CD8-positive, alpha-beta T cell (primary cell): ENCODE measurements at regions of chr2 and their contacts with region 1.

Region 1: DNA sequence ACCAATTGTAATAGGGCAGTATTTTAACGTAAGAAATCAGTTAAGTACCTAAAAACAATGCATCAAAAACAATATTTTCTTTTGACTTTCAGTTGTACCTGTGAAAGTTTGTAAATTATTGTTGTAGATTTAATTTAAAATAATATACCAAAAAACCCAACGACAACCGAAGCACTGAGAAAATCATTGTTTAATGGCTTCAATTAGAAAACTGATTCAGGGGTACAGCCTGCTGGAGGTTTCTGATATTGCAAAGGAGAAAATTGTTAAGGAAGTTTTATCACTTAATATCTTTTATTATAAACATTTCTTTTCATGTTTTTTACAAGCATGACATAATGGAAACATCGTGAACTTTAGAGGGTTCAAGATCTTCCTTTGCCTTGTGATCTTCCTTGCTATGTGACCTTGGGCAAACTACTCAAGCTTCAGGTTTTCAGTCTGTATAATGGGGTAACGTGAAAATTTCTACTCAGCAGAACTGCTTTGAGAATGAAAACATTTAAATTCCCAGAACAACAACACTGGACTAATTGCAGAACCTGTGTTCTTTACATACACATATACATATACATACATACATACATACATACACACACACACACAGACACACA is 76.3 kb upstream of the GLS start:
- DNase-seq: peak in 2 of 9 experiments; percentile 22 to 33
- ATAC-seq: no peak
- H3K4me3 ChIP-seq: no peak overlapping the region
- H3K4me3 Mint-ChIP-seq: no peak overlapping the region
- H3K27ac ChIP-seq: no peak overlapping the region
- H3K27ac Mint-ChIP-seq: no peak overlapping the region
- H3K4me1 ChIP-seq: no peaks in the 10 kb centered on the region
- H3K4me1 Mint-ChIP-seq: no peaks in the 10 kb centered on the region
- H3K27me3 ChIP-seq: no peaks in the 10 kb centered on the region
- H3K27me3 Mint-ChIP-seq: no peaks in the 10 kb centered on the region
- CTCF ChIP-seq: peak; percentile 72

Region 2: DNA sequence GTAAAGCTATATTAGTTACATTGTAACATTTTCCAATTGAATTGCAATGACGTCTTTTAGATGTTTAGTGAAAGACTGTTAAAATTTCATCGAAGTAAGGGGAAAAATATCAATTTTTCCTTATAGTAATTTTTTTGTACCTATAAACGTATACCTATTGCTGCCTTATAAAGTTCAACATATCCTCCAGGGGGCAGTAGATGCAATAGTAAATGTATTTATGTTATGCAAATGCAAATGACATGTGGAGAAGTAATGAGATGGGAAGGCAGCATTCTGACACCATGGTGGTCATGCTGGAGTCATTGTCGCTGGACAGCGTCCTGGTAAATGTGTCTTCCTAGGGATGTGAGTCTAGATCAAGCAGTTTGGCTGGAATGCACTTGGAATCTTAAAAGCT is 780.4 kb before region 1 on chr2:
- CTCF ChIA-PET with region 1: no interaction called
- POLR2A ChIA-PET with region 1: no interaction called
- intact Hi-C with region 1: loop called in 1 of 2 experiments (anchors 10 kb)
- DNase-seq: peak in 2 of 9 experiments; percentile 42 to 54
- ATAC-seq: no peak
- H3K4me3 ChIP-seq: no peak overlapping the region
- H3K4me3 Mint-ChIP-seq: no peak overlapping the region
- H3K27ac ChIP-seq: no peak overlapping the region
- H3K27ac Mint-ChIP-seq: no peak overlapping the region
- H3K4me1 ChIP-seq: no peaks in the 10 kb centered on the region
- H3K4me1 Mint-ChIP-seq: no peaks in the 10 kb centered on the region
- H3K27me3 ChIP-seq: no peaks in the 10 kb centered on the region
- H3K27me3 Mint-ChIP-seq: peaks cover 17% of the 10 kb centered on the region
- CTCF ChIP-seq: peak; percentile 64

Region 3: DNA sequence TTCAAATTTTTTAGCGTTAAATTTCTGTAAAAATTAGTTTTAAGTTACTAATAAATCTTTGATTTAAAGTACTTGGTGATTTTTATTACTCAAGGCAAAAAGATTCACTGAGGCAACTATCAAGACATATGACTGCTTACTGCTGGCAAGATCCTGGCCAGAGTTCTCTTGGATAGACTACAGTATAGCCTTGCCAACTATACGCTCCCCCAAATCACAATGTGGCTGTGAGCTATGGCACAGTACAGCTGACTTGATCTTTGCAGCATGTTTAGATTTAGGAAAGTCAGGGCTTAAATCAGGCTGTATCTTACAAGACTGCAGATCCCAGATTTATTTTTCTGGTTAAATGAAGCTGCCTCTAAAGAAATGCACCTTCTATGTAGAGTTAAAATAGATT is 768.2 kb before region 1 on chr2:
- CTCF ChIA-PET with region 1: no interaction called
- POLR2A ChIA-PET with region 1: no interaction called
- intact Hi-C with region 1: no loop called
- DNase-seq: no peak
- ATAC-seq: no peak
- H3K4me3 ChIP-seq: no peak overlapping the region
- H3K4me3 Mint-ChIP-seq: no peak overlapping the region
- H3K27ac ChIP-seq: no peak overlapping the region
- H3K27ac Mint-ChIP-seq: no peak overlapping the region
- H3K4me1 ChIP-seq: no peaks in the 10 kb centered on the region
- H3K4me1 Mint-ChIP-seq: no peaks in the 10 kb centered on the region
- H3K27me3 ChIP-seq: peaks cover 0 to 3% of the 10 kb centered on the region in 2 experiments
- H3K27me3 Mint-ChIP-seq: peaks cover 6% of the 10 kb centered on the region
- CTCF ChIP-seq: no peak

Region 4: DNA sequence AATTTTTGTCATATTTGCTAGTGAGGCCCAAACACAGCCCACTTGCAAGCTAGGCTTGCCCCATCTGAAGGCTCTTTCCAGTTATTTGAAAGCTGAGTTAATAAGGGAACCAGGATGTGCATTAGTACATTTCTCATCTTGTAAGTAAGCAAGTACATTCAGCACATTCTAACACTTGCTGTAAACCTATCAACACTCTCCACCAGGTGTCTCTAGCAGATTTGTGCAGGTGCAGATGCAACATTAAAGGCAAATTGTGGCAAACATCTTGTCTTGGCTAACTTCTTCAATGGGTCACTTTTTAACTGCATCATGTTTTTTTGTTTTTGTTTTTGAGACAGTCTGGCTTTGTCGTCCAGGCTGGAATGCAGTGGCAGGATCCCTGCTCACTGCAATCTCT is 421.4 kb before region 1 on chr2:
- CTCF ChIA-PET with region 1: interaction called, 20 read pairs
- POLR2A ChIA-PET with region 1: interaction called, 4 read pairs
- intact Hi-C with region 1: loop called (anchors 1 kb)
- DNase-seq: peak in 6 of 9 experiments; percentile 15 to 82 (median 30)
- ATAC-seq: peak; percentile 87
- H3K4me3 ChIP-seq: no peak overlapping the region
- H3K4me3 Mint-ChIP-seq: no peak overlapping the region
- H3K27ac ChIP-seq: no peak overlapping the region
- H3K27ac Mint-ChIP-seq: no peak overlapping the region
- H3K4me1 ChIP-seq: no peaks in the 10 kb centered on the region
- H3K4me1 Mint-ChIP-seq: no peaks in the 10 kb centered on the region
- H3K27me3 ChIP-seq: no peaks in the 10 kb centered on the region
- H3K27me3 Mint-ChIP-seq: no peaks in the 10 kb centered on the region
- CTCF ChIP-seq: peak; percentile 66

Region 5: DNA sequence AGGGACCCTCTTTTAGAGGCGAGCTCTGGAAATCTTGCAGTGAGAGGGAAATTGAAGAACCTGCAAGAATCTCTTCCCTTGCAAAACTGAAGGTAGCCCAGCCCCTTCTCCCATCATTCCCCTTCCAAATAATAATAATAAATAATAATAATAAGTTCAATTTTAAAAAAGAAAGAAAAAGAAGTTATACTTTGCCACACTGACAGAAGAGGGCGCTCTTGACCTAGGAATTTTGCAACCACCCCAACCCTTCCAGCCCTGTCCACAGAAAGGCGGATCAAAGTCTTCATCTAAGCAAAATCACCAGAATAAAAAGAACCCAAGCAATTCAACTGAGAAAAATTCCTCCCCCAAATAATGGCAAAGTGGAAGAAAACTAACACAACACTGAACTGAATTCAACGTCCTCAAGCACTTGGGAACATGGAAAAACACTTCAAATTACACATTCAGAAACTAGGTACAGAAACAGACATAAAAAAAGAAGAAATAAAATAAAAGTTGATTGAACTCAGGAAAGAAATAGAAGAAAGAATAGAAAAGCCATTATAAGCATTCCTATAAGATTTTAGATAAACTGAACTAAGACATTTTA is 22.6 kb before region 1 on chr2:
- CTCF ChIA-PET with region 1: interaction called, 4 read pairs
- POLR2A ChIA-PET with region 1: no interaction called
- intact Hi-C with region 1: loop called in 1 of 2 experiments (anchors 2 kb)
- DNase-seq: peak in 8 of 9 experiments; percentile 6 to 74 (median 48)
- ATAC-seq: peak; percentile 63
- H3K4me3 ChIP-seq: no peak overlapping the region
- H3K4me3 Mint-ChIP-seq: no peak overlapping the region
- H3K27ac ChIP-seq: no peak overlapping the region
- H3K27ac Mint-ChIP-seq: no peak overlapping the region
- H3K4me1 ChIP-seq: no peaks in the 10 kb centered on the region
- H3K4me1 Mint-ChIP-seq: peaks cover 3% of the 10 kb centered on the region
- H3K27me3 ChIP-seq: no peaks in the 10 kb centered on the region
- H3K27me3 Mint-ChIP-seq: peaks cover 7% of the 10 kb centered on the region
- CTCF ChIP-seq: peak; percentile 70

Region 6: GRCh38 chr2:191013932-191014652 is 209.8 kb after region 1 on chr2 and contains the start of gene STAT1:
- CTCF ChIA-PET with region 1: no interaction called
- POLR2A ChIA-PET with region 1: no interaction called
- intact Hi-C with region 1: no loop called
- DNase-seq: peak; percentile 93 to 98 (median 96)
- ATAC-seq: peak; percentile 87
- H3K4me3 ChIP-seq: peak within 1 kb of the TSS; percentile 61 to 88
- H3K4me3 Mint-ChIP-seq: no peak within 1 kb of the TSS
- H3K27ac ChIP-seq: peak within 1 kb of the TSS; percentile 91 to 94
- H3K27ac Mint-ChIP-seq: no peak within 1 kb of the TSS
- H3K4me1 ChIP-seq: peaks cover 59% of the 10 kb centered on the region
- H3K4me1 Mint-ChIP-seq: peaks cover 44% of the 10 kb centered on the region
- H3K27me3 ChIP-seq: no peaks in the 10 kb centered on the region
- H3K27me3 Mint-ChIP-seq: no peaks in the 10 kb centered on the region
- CTCF ChIP-seq: no peak
- total RNA-seq, gene STAT1: 66.7 to 69.9 TPM

Region 7: GRCh38 chr2:192467953-192468660 is 1663.8 kb after region 1 on chr2:
- CTCF ChIA-PET with region 1: no interaction called
- POLR2A ChIA-PET with region 1: no interaction called
- intact Hi-C with region 1: no loop called
- DNase-seq: no peak
- ATAC-seq: no peak
- H3K4me3 ChIP-seq: no peak overlapping the region
- H3K4me3 Mint-ChIP-seq: no peak overlapping the region
- H3K27ac ChIP-seq: no peak overlapping the region
- H3K27ac Mint-ChIP-seq: no peak overlapping the region
- H3K4me1 ChIP-seq: no peaks in the 10 kb centered on the region
- H3K4me1 Mint-ChIP-seq: no peaks in the 10 kb centered on the region
- H3K27me3 ChIP-seq: no peaks in the 10 kb centered on the region
- H3K27me3 Mint-ChIP-seq: no peaks in the 10 kb centered on the region
- CTCF ChIP-seq: no peak